Endothelial cell of umbilical vein (primary cell): ENCODE measurements at regions of chr12 and their contacts with region 1.

Region 1: DNA sequence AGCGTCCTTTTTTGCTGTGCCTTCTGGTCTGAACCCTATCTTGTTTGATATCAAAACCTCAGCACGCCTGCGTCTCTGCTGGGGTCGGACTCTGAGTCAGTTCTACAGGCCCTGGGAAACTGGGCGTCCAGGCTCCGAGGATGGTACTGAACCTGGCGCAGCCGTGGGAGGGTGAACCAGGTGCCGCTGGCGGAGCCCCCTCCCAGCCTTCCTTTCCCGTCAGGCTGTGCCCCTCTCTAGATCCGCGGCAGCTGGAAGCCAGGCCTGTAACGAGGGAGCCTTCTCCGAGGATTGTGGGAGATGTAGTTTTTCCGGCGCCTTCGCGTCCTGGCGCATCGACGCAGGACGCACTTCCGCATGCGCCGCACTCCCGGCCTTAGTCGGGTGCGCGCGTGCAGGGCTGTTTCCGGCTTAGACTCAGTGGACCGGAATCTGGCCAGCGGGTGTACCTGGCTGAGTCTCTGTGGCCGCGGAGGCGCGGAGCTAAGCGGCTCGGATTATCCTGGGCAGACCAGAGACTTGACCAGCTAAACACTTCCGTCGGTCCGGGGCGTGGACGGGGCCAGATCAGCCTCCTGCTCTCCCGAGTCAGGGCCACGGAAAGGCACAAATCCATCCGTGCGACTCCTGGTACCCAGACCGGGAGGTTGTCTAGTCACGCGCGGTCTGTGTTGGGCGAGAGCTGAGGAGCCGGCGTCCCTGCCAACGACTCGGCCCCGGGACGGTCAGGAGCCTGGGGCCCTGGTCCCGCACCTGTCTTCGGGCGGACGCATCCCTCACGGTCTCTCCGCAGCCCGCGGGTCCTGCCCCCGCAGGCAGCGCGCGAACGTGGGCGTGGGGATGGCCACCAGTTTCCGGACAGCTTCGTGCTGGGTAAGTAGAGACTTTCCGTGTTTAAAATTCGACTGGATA is at the start of gene ZNF26:
- DNase-seq: peak; percentile 94
- H3K4me3 ChIP-seq: peak within 1 kb of the TSS; percentile 16 to 91 (median 61)
- H3K27ac ChIP-seq: peak within 1 kb of the TSS; percentile 59
- H3K4me1 ChIP-seq: peaks cover 11% of the 10 kb centered on the region
- H3K27me3 ChIP-seq: no peaks in the 10 kb centered on the region
- CTCF ChIP-seq: no peak
- POLR2A ChIP-seq: peak; percentile 74
- total RNA-seq, gene ZNF26: 9.7 and 11.1 TPM in 2 replicates

Region 2: GRCh38 chr12:133037207-133038005 is 51.1 kb after region 1 on chr12 and contains the start of gene ZNF84:
- CTCF ChIA-PET with region 1: no interaction called
- POLR2A ChIA-PET with region 1: no interaction called
- dilution Hi-C with region 1: no loop called
- intact Hi-C with region 1: loop called (anchors 1 kb)
- DNase-seq: peak; percentile 99
- H3K4me3 ChIP-seq: peak within 1 kb of the TSS; percentile 42 to 90 (median 78)
- H3K27ac ChIP-seq: peak within 1 kb of the TSS; percentile 59
- H3K4me1 ChIP-seq: no peaks in the 10 kb centered on the region
- H3K27me3 ChIP-seq: no peaks in the 10 kb centered on the region
- CTCF ChIP-seq: no peak
- POLR2A ChIP-seq: peak; percentile 83
- total RNA-seq, gene ZNF84: 26.0 TPM in 2 replicates